ENCODE measurements at regions of chr18 and their contacts with region 1.

Region 1: GRCh38 chr18:11908182-11909060 is at the start of gene MPPE1:
- DNase-seq: peak; percentile 99
- H3K4me3 ChIP-seq: peak within 1 kb of the TSS; percentile 69 to 89 (median 77)
- H3K27ac ChIP-seq: peak within 1 kb of the TSS; percentile 95 to 100 (median 100)
- H3K4me1 ChIP-seq: peaks cover 18 to 53% (median 30%) of the 10 kb centered on the region in 6 donors
- H3K27me3 ChIP-seq: no peaks in the 10 kb centered on the region
- CTCF ChIP-seq: peak in 2 of 11 experiments; percentile 22 to 31
- POLR2A ChIP-seq: peak in 2 of 3 donors; percentile 71 to 74
- total RNA-seq, gene MPPE1: 44.9 to 89.9 (median 57.3) TPM

Region 2: DNA sequence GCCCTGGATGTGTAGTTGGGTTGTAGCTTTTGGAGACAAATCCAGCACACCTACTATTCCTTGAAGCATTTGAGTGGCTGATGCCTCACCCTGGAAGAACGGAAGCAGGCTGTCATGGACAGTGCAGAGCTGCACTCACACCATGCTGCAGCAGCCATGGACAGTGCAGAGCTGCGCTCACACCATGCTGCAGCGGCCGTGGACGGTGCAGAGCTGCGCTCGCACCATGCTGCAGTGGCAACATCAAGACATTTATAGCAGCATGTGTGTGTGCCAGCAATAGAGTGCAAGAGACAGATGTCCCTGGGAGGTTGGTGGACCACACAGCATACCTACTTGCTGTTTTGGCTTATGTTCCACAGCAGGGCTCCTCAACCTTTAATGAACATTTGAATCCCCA is 188.8 kb before region 1 on chr18:
- intact Hi-C with region 1: no loop called
- DNase-seq: no peak
- H3K4me3 ChIP-seq: no peak overlapping the region
- H3K27ac ChIP-seq: no peak overlapping the region
- H3K4me1 ChIP-seq: peaks cover 0 to 4% (median 0%) of the 10 kb centered on the region in 6 donors
- H3K27me3 ChIP-seq: peaks cover 0 to 6% (median 0%) of the 10 kb centered on the region in 7 donors
- CTCF ChIP-seq: no peak
- POLR2A ChIP-seq: no peak

Region 3: DNA sequence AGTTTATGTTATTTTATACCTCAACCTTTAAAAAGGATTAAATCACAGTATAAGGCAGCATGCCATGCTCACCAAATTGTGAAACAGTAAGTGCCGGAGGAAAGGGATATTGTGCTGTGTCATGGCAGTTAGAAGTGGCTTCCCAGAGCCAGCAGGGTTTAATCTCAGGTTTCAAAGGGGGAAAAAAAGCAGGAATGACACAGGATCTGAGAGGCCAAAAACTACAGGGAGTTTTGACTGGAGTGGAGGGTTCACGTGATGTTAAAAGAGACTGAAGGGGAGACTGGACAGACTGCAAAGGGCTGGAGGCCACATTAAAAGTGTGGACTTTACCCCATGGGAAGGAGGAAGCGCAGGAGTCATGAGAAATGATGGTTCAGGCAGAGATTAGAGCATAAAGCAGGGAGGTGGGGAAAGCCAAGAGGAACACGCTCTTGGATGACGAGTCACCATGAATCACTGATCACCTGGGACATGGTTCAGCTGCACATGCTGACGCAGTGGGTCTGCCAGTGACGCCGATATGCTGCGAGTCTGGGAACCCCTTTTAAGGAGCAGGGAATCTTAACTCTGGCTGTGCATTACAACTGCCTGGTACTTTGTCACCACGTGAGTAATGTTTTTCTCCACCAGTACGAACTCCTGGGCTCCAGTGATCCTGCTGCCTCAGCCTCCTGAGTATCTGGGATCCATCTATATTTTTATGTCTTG is 51.1 kb before region 1 on chr18:
- intact Hi-C with region 1: loop called (anchors 5 kb)
- DNase-seq: peak; percentile 36
- H3K4me3 ChIP-seq: no peak overlapping the region
- H3K27ac ChIP-seq: peak overlapping the region in 3 of 8 donors; percentile 19 to 55 (median 35)
- H3K4me1 ChIP-seq: peaks cover 18 to 61% (median 32%) of the 10 kb centered on the region in 6 donors
- H3K27me3 ChIP-seq: no peaks in the 10 kb centered on the region
- CTCF ChIP-seq: no peak
- POLR2A ChIP-seq: no peak